CD8-positive, alpha-beta T cell (primary cell): ENCODE measurements at regions of chr10 and their contacts with region 1.

Region 1: DNA sequence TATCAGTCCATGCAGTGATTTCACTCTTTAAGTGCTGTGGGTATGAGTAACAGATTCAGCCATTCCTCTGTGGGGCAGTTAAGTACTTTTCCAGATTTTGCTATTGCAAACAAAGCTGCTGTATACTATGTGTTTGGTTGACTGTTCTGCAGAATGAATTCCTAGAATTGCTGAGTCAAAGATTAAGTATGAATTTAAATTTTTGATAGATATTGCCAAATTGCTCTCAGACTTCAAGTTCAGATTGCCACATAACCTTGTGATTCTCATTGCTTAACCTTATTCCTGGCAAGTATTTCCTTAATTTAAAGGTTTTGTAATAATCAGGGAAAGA is 21.6 kb upstream of the SAR1A start:
- DNase-seq: no peak
- ATAC-seq: no peak
- H3K4me3 ChIP-seq: no peak overlapping the region
- H3K4me3 Mint-ChIP-seq: no peak overlapping the region
- H3K27ac ChIP-seq: no peak overlapping the region
- H3K27ac Mint-ChIP-seq: no peak overlapping the region
- H3K4me1 ChIP-seq: peaks cover 5% of the 10 kb centered on the region
- H3K4me1 Mint-ChIP-seq: peaks cover 7% of the 10 kb centered on the region
- H3K27me3 ChIP-seq: no peaks in the 10 kb centered on the region
- H3K27me3 Mint-ChIP-seq: no peaks in the 10 kb centered on the region
- CTCF ChIP-seq: no peak

Region 2: GRCh38 chr10:70084189-70084588 is 107.8 kb before region 1 on chr10:
- CTCF ChIA-PET with region 1: no interaction called
- POLR2A ChIA-PET with region 1: no interaction called
- intact Hi-C with region 1: loop called in 1 of 2 experiments (anchors 10 kb)
- DNase-seq: peak in 2 of 9 experiments; percentile 15 to 31
- ATAC-seq: no peak
- H3K4me3 ChIP-seq: no peak overlapping the region
- H3K4me3 Mint-ChIP-seq: no peak overlapping the region
- H3K27ac ChIP-seq: no peak overlapping the region
- H3K27ac Mint-ChIP-seq: no peak overlapping the region
- H3K4me1 ChIP-seq: no peaks in the 10 kb centered on the region
- H3K4me1 Mint-ChIP-seq: no peaks in the 10 kb centered on the region
- H3K27me3 ChIP-seq: no peaks in the 10 kb centered on the region
- H3K27me3 Mint-ChIP-seq: no peaks in the 10 kb centered on the region
- CTCF ChIP-seq: no peak

Region 3: DNA sequence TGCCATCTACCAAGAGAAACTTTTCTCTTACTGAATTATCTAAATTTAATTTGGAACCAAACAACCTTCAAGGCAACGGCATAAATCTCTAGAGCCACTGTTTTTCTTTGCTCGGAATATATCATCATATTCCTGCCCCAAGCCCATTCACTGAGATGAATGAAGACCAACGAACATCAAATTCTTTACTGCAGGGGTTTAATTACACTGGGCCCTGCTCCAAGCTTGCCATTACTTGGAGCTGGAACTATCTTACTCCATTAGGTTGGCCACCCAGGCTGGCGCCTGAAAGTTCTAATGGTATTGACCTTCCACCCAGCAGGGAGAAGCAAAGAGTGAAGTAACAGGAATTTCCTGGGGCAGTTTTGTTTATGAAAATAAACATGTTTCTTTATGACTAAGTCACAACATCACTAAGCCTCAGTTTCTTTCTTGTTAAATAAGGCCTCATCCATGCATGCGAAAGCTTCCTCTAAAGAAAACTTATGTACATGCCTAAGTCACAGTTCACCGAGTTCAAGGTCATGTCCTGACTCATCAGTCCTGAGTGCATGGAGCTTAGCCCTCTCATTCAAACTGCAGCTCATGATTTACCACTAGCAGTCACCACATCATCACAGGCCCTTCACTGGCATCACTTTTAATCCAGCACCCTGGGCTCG is 1981.8 kb after region 1 on chr10:
- CTCF ChIA-PET with region 1: no interaction called
- POLR2A ChIA-PET with region 1: no interaction called
- intact Hi-C with region 1: no loop called
- DNase-seq: no peak
- ATAC-seq: no peak
- H3K4me3 ChIP-seq: no peak overlapping the region
- H3K4me3 Mint-ChIP-seq: no peak overlapping the region
- H3K27ac ChIP-seq: no peak overlapping the region
- H3K27ac Mint-ChIP-seq: no peak overlapping the region
- H3K4me1 ChIP-seq: peaks cover 4% of the 10 kb centered on the region
- H3K4me1 Mint-ChIP-seq: peaks cover 7% of the 10 kb centered on the region
- H3K27me3 ChIP-seq: no peaks in the 10 kb centered on the region
- H3K27me3 Mint-ChIP-seq: no peaks in the 10 kb centered on the region
- CTCF ChIP-seq: no peak